Calu3 (cell line): ENCODE measurements at regions of chr11 and their contacts with region 1.

Region 1: GRCh38 chr11:92211576-92212167 is 12.9 kb upstream of the FAT3 start:
- DNase-seq: peak; percentile 37
- H3K4me3 Mint-ChIP-seq: no peak overlapping the region
- H3K27ac Mint-ChIP-seq: no peak overlapping the region
- H3K4me1 Mint-ChIP-seq: no peaks in the 10 kb centered on the region
- H3K27me3 Mint-ChIP-seq: no peaks in the 10 kb centered on the region
- CTCF ChIP-seq: no peak

Region 2: DNA sequence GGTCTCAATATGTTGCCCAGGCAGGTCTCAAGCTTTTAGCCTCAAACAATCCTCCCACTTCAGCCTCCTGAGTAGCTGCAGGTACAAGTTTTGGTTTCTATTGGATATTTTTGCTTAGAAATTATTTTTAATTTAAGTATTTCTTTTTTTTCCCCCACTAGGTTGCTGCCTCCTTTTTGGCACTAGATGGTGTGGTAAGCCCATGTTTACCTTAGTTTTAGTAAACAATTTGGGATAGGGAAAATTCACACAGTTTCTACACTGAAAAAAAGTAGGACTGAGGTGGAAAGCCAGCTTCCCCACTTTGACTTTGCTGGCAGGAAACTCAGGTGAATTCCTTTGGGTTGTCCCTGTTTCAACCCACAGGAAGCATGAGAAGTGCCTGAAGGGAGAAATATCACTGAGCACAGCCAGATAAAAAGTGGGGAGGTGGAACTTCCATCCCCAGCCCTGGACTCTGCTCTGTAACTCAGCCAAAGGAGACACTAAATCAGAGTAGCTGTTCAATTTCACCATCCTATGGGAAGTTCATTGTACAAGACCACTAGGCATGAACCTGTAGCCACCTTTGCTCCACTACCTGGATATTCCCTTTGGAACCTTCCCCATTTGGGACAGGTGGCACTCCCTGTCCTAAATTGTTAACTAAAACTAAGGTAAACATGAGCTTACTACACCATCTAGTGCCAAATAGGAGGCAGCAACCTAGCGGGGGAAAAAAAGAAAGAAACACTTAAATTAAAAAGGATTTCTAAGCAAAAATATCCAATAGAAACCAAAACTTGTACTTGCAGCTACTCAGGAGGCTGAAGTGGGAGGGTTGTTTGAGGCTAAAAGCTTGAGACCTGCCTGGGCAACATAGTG is 141.4 kb before region 1 on chr11:
- CTCF ChIA-PET with region 1: no interaction called
- intact Hi-C with region 1: no loop called
- DNase-seq: no peak
- H3K4me3 Mint-ChIP-seq: no peak overlapping the region
- H3K27ac Mint-ChIP-seq: no peak overlapping the region
- H3K4me1 Mint-ChIP-seq: no peaks in the 10 kb centered on the region
- H3K27me3 Mint-ChIP-seq: no peaks in the 10 kb centered on the region
- CTCF ChIP-seq: no peak

Region 3: DNA sequence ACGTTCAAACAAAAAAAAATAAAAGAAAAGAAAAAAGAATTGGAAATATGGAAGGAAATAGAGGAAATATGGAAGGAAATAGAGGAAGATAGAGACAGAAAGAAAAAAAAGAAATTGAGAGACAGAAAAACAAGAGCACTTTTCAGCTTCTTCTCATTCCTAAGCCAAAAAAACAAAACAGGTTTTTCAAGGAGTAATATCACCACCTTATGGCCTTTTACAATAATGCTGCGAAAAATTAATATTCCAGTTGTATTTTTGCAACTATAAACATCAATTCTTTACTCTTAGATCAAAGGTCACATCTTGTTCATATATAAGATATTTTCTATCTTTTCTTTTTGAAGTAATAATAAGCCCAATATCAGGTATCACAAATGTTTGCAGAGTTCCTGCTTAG is 341.3 kb after region 1 on chr11:
- CTCF ChIA-PET with region 1: interaction called, 3 read pairs
- intact Hi-C with region 1: loop called (anchors 5 kb)
- DNase-seq: no peak
- H3K4me3 Mint-ChIP-seq: no peak overlapping the region
- H3K27ac Mint-ChIP-seq: no peak overlapping the region
- H3K4me1 Mint-ChIP-seq: no peaks in the 10 kb centered on the region
- H3K27me3 Mint-ChIP-seq: no peaks in the 10 kb centered on the region
- CTCF ChIP-seq: no peak

Region 4: DNA sequence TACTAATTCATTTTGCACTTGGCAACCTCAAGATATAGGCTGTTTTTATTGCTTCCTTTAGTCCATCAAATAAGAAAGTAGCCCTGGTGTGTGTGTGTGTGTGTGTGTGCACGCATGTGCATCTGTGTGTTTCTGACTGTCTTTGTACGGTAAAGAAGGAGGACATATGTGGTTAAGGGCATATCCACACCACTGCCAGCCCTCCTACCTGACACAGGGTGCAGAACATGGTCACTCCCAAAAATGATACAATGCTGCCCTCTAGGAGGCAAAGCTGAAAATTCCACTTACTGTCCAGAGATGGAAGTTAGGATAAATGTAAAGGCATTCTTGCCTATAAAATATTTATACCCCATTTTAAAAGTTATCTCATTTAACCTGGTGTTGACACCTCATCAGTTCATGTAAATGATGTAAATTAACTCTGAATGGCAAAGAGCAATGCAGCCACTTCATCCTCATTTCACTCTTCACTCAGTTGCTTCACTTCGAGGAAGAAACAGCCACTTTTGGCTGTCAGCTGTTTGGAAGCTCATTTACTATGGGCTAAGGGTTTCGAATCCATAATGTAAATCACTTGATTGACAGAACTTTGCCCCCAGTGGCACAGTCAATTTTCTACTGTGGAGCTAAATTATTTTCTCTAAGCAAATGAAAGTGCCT is 674.7 kb after region 1 on chr11:
- CTCF ChIA-PET with region 1: no interaction called
- intact Hi-C with region 1: loop called (anchors 1 kb)
- DNase-seq: peak; percentile 44
- H3K4me3 Mint-ChIP-seq: no peak overlapping the region
- H3K27ac Mint-ChIP-seq: no peak overlapping the region
- H3K4me1 Mint-ChIP-seq: no peaks in the 10 kb centered on the region
- H3K27me3 Mint-ChIP-seq: no peaks in the 10 kb centered on the region
- CTCF ChIP-seq: no peak